ENCODE measurements at regions of chr16 and their contacts with region 1.

Region 1: DNA sequence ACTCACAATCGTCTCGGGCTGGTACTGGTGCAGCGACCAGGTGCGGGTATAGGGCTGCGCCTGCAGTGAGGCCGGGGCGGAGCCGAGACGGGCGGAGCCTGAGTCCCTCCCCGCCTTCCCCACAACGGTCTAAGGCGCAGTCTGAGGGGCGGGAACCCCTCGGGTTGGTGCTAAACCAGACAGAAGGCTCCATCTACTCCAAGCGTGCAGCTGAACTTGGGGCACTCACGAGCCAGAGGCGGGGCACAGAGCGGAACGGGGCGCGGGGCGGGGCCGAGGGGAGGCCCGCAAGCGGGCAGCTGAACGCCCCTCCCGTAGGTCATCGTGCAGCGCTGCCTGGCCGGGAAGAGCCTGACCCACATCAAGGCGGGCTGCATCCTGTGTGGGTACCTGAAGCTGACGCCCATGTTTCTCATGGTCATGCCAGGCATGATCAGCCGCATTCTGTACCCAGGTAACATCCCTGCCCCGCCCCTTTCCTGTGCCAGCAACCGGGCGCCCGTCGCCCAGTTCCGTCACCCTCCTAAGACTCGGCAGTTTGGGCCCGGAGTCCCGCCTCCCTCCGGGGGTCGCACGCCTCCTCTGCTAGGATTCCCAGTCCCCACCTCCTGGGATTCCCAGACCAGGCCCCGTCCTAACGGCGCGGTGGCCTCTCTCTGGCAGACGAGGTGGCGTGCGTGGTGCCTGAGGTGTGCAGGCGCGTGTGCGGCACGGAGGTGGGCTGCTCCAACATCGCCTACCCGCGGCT is 5.0 kb downstream of the SLC5A2 start:
- DNase-seq: peak; percentile 46 to 90 (median 78)
- ATAC-seq: peak; percentile 90
- H3K4me3 ChIP-seq: peak overlapping the region; percentile 71 to 86
- H3K4me3 Mint-ChIP-seq: peak overlapping the region; percentile 90
- H3K27ac ChIP-seq: peak overlapping the region; percentile 38 to 58
- H3K27ac Mint-ChIP-seq: peak overlapping the region; percentile 88
- H3K4me1 ChIP-seq: peaks cover 16% of the 10 kb centered on the region
- H3K4me1 Mint-ChIP-seq: peaks cover 11% of the 10 kb centered on the region
- H3K27me3 ChIP-seq: no peaks in the 10 kb centered on the region
- H3K27me3 Mint-ChIP-seq: no peaks in the 10 kb centered on the region
- CTCF ChIP-seq: no peak

Region 2: DNA sequence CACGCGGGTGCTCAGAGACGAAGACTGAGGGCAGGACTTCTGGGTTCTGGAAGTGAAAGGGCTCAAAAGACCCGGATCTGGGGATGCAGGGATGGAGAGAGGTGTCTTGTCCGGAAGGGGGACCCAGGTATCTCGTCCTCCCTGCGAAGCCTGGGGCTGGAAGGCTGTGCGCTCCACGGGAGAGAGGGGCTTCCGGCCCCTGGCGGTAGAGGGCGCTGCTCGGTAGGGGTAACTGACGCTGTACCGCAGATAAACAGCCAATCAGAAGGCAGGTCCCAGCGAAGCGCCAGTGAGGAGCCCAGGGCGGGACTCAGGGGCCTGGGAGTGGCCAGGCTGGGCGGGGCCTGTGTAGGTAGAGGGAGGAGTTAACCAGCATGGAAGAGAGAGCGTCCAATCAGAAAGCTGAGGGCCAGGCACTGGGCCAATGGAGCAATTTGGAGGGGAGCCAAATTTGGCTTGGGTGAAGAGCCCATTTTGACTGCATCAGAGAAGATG is 15.1 kb before region 1 on chr16:
- CTCF ChIA-PET with region 1: interaction called, 5 read pairs
- POLR2A ChIA-PET with region 1: interaction called, 18 read pairs
- intact Hi-C with region 1: loop called (anchors 1 kb)
- DNase-seq: peak in 4 of 9 experiments; percentile 52 to 58 (median 55)
- ATAC-seq: peak; percentile 37
- H3K4me3 ChIP-seq: no peak overlapping the region
- H3K4me3 Mint-ChIP-seq: peak overlapping the region; percentile 77
- H3K27ac ChIP-seq: no peak overlapping the region
- H3K27ac Mint-ChIP-seq: no peak overlapping the region
- H3K4me1 ChIP-seq: peaks cover 18% of the 10 kb centered on the region
- H3K4me1 Mint-ChIP-seq: peaks cover 19% of the 10 kb centered on the region
- H3K27me3 ChIP-seq: peaks cover 4 to 9% of the 10 kb centered on the region in 2 experiments
- H3K27me3 Mint-ChIP-seq: peaks cover 19% of the 10 kb centered on the region
- CTCF ChIP-seq: no peak